Heart right ventricle (tissue), 16 donors: ENCODE measurements at regions of chr6 and their contacts with region 1.

Region 1: GRCh38 chr6:75504465-75505228 is 11.0 kb upstream of the FILIP1 start:
- DNase-seq: peak in 1 of 2 donors; percentile 25
- ATAC-seq: peak; percentile 71 to 90 (median 84)
- H3K4me3 ChIP-seq: no peak overlapping the region
- H3K27ac ChIP-seq: no peak overlapping the region
- H3K4me1 ChIP-seq: peaks cover 0 to 39% (median 3%) of the 10 kb centered on the region in 9 donors
- H3K27me3 ChIP-seq: no peaks in the 10 kb centered on the region
- CTCF ChIP-seq: peak in 8 of 9 donors; percentile 24 to 74 (median 53)

Region 2: GRCh38 chr6:75266716-75267291 is 237.8 kb before region 1 on chr6:
- intact Hi-C with region 1: loop called in 3 of 10 experiments (anchors 5 kb)
- DNase-seq: no peak
- ATAC-seq: peak in 7 of 8 donors; percentile 66 to 80 (median 70)
- H3K4me3 ChIP-seq: no peak overlapping the region
- H3K27ac ChIP-seq: no peak overlapping the region
- H3K4me1 ChIP-seq: peaks cover 3 to 39% (median 25%) of the 10 kb centered on the region in 9 donors
- H3K27me3 ChIP-seq: no peaks in the 10 kb centered on the region
- CTCF ChIP-seq: peak; percentile 73 to 92 (median 84)

Region 3: GRCh38 chr6:75275067-75275466 is 229.6 kb before region 1 on chr6:
- intact Hi-C with region 1: loop called in 1 of 10 experiments (anchors 5 kb)
- DNase-seq: no peak
- ATAC-seq: no peak
- H3K4me3 ChIP-seq: no peak overlapping the region
- H3K27ac ChIP-seq: peak overlapping the region in 1 of 10 donors; percentile 1
- H3K4me1 ChIP-seq: peaks cover 0 to 94% (median 41%) of the 10 kb centered on the region in 9 donors
- H3K27me3 ChIP-seq: no peaks in the 10 kb centered on the region
- CTCF ChIP-seq: no peak

Region 4: GRCh38 chr6:75296811-75297779 is 207.6 kb before region 1 on chr6:
- intact Hi-C with region 1: loop called in 8 of 10 experiments (anchors 1 to 10 kb)
- DNase-seq: no peak
- ATAC-seq: peak in 7 of 8 donors; percentile 20 to 59 (median 39)
- H3K4me3 ChIP-seq: no peak overlapping the region
- H3K27ac ChIP-seq: no peak overlapping the region
- H3K4me1 ChIP-seq: peaks cover 0 to 32% (median 24%) of the 10 kb centered on the region in 9 donors
- H3K27me3 ChIP-seq: no peaks in the 10 kb centered on the region
- CTCF ChIP-seq: peak; percentile 60 to 86 (median 76)